ENCODE measurements at regions of chr2 and their contacts with region 1.

Region 1: GRCh38 chr2:141791521-141791920 is 339.3 kb downstream of the LRP1B start:
- DNase-seq: no peak
- H3K4me3 ChIP-seq: no peak overlapping the region
- H3K27ac ChIP-seq: no peak overlapping the region
- H3K4me1 ChIP-seq: no peaks in the 10 kb centered on the region
- H3K27me3 ChIP-seq: no peaks in the 10 kb centered on the region
- CTCF ChIP-seq: no peak
- POLR2A ChIP-seq: no peak

Region 2: GRCh38 chr2:139850254-139850890 is 1941.1 kb before region 1 on chr2:
- intact Hi-C with region 1: loop called (anchors 5 kb)
- DNase-seq: no peak
- H3K4me3 ChIP-seq: no peak overlapping the region
- H3K27ac ChIP-seq: no peak overlapping the region
- H3K4me1 ChIP-seq: no peaks in the 10 kb centered on the region
- H3K27me3 ChIP-seq: no peaks in the 10 kb centered on the region
- CTCF ChIP-seq: no peak
- POLR2A ChIP-seq: no peak